H1 (cell line): ENCODE measurements at regions of chr6 and their contacts with region 1.

Region 1: DNA sequence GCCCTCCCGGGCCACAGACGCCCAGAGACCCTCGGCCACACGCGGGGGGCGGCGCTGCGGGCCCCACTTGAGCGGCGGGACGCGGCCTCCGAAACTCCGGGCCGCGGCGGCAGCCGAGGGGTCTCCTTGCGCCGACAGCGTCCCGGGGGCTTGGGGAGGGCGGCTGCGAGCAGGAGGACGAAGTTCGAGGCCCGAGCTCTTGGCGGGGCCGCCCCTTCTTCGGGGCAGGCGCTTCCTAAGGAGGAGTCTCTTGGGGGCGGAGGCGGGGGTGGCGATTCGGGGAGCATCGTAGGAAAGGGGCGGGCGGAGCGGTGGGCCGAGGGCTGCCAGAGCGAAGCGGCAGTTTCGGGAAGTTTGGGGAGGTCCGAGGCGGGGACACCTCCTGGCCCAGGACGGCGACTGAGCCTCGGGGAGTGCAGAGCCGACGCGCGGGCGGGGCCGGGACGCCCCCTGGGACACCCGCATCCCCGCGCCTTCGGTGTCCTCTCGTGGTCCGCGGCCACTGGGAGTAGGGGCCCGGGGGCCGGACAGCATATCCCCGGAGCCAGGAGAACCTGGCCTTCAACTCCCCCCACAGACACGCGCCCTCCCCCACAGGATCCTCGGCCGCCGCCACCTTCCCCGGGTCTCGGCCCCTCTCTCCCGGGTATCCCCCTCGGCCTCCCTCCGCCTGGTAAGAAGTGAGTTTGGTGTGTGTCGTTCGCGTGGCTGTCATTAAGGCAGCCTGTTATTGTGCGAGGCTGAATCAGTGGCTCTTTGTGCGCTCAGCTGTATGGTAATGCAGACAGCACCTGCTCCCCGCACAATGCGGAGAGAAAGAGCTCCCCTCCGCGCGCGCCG is 613 bp upstream of the DLL1 start:
- DNase-seq: peak; percentile 67 to 88
- H3K4me3 ChIP-seq: peak overlapping the region; percentile 48 to 77 (median 66)
- H3K27ac ChIP-seq: no peak overlapping the region
- H3K4me1 ChIP-seq: peaks cover 21 to 53% (median 28%) of the 10 kb centered on the region in 4 experiments
- H3K27me3 ChIP-seq: peaks cover 55 to 86% (median 77%) of the 10 kb centered on the region in 4 experiments
- CTCF ChIP-seq: no peak
- EP300 ChIP-seq: no peak
- POLR2A ChIP-seq: no peak
- RAD21 ChIP-seq: peak; percentile 2; a peak in 1 of 4 replicates

Region 2: DNA sequence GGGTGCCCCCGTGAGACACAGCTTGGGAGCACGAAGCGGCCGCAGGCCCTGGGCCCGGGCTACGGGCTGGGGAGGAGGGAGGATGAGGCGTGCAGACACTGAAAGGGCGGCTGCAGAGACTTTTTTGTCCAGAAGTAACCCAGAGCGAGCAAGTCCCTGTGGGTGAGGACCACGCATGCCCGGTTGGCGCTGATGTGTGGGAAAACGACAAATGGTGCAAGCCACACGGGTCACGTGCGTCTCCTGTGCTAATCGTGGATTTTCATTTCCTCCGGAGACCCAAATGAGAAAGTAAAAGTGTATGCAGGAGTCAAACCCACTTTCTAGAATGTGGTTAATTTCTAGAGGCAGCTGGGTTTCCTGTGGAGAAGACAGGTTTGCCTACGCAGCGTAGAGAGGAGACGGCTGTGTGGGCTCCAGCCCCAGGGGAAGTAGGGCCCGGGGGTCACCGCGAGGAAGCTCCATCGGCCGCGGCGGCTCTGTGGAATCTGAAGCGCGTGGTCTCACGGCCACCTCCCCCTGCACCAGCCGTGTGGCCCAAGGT is 19.6 kb before region 1 on chr6:
- CTCF ChIA-PET with region 1: interaction called, 4 read pairs
- POLR2A ChIA-PET with region 1: interaction called, 17 read pairs
- DNase-seq: no peak
- H3K4me3 ChIP-seq: no peak overlapping the region
- H3K27ac ChIP-seq: no peak overlapping the region
- H3K4me1 ChIP-seq: peaks cover 0 to 5% (median under 1%) of the 10 kb centered on the region in 4 experiments; a peak in 2 of 7 replicates
- H3K27me3 ChIP-seq: no peaks in the 10 kb centered on the region
- CTCF ChIP-seq: no peak
- EP300 ChIP-seq: no peak
- POLR2A ChIP-seq: no peak
- RAD21 ChIP-seq: no peak

Region 3: DNA sequence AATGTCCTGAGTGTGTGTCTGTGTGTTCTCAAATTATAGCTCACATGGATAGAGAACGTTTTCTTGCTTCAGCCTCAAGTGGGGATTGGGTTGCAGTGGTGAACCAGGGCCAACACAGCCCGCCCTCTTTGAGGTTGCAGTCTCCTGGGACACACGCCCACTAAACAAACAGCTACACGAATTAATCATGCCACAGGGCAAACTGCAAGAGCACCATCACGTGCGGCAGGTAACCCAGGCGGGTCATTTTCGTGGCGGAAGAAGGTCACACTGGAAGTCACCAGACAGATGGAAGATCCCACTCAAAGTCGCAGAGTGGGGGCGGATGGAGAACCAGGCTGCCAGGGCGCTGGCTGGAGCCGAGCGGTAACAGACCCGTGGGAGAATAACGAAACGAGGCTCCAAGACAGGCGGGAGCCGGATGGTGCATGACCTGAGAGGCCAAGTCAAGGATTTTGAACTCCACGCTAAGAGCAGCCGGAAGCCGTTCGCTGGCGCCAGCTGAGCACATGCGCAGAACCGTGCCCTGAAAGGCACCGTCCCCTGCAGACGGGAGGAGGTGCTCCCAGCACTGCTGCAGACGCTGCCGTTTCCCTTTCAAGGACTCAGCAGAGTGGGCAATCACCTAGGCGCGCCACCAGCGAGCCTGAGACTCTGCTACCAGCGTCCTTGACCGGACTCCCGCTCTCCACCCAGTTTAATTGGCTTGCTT is 11.4 kb before region 1 on chr6:
- CTCF ChIA-PET with region 1: interaction called, 4 read pairs
- POLR2A ChIA-PET with region 1: interaction called, 17 read pairs
- DNase-seq: no peak
- H3K4me3 ChIP-seq: no peak overlapping the region
- H3K27ac ChIP-seq: no peak overlapping the region
- H3K4me1 ChIP-seq: peaks cover 0 to 3% (median 0%) of the 10 kb centered on the region in 4 experiments; a peak in 2 of 7 replicates
- H3K27me3 ChIP-seq: peaks cover 0 to 6% (median 1%) of the 10 kb centered on the region in 4 experiments; a peak in 4 of 7 replicates
- CTCF ChIP-seq: no peak
- EP300 ChIP-seq: no peak
- POLR2A ChIP-seq: no peak
- RAD21 ChIP-seq: no peak

Region 4: GRCh38 chr6:170306324-170307079 is 15.0 kb after region 1 on chr6 and contains the start of gene FAM120B:
- CTCF ChIA-PET with region 1: interaction called, 4 read pairs
- POLR2A ChIA-PET with region 1: interaction called, 10 read pairs
- DNase-seq: peak; percentile 53 to 82
- H3K4me3 ChIP-seq: peak within 1 kb of the TSS; percentile 55 to 72 (median 64)
- H3K27ac ChIP-seq: no peak within 1 kb of the TSS
- H3K4me1 ChIP-seq: peaks cover 0 to 9% (median 0%) of the 10 kb centered on the region in 4 experiments; a peak in 3 of 7 replicates
- H3K27me3 ChIP-seq: peaks cover 0 to 28% (median 18%) of the 10 kb centered on the region in 4 experiments; a peak in 6 of 7 replicates
- CTCF ChIP-seq: no peak
- EP300 ChIP-seq: no peak
- POLR2A ChIP-seq: no peak; a peak in 1 of 3 replicates
- RAD21 ChIP-seq: no peak
- total RNA-seq, gene FAM120B: 12.0 and 12.5 TPM in 2 replicates

Region 5: DNA sequence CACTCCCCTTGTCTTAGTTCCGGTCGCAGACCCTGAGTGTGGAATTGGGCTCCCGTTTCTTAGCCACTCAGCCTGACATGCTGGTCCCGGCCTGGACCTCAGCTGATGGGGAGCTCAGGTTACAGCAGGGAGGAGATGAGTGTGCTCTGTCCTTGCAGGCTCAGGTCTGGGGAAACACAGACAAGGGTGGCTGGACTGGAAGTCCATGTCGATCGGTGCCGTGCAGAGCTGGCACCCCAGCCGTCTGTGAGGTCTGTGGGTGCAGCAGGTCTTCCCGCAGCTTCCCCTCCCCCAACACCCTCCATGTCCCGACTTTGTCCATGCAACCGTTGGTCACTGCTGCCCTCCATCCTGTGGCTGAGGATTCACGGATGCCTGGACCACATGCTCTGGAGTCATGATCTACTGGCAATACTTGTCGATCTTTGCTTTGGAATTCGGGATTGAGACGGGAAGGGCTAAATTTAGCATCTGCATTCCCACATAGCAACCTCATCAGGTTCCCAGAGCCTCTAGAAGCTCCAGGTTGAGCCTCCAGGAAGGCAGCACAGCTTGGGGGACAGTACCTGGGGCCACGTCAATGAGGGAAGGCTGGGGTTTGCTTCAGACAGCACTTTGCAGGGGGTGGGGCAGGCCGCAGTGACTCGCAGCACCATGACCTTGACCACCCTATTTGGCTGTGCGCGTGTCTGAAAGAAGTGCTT is 142.8 kb after region 1 on chr6:
- CTCF ChIA-PET with region 1: no interaction called
- POLR2A ChIA-PET with region 1: no interaction called
- DNase-seq: peak in 1 of 2 experiments; percentile 49
- H3K4me3 ChIP-seq: no peak overlapping the region
- H3K27ac ChIP-seq: no peak overlapping the region
- H3K4me1 ChIP-seq: peaks cover 0 to 16% (median 9%) of the 10 kb centered on the region in 4 experiments; a peak in 6 of 7 replicates
- H3K27me3 ChIP-seq: no peaks in the 10 kb centered on the region
- CTCF ChIP-seq: no peak
- EP300 ChIP-seq: no peak
- POLR2A ChIP-seq: no peak
- RAD21 ChIP-seq: no peak